Activated B cell treated with CpG ODN at 0.5 μM for 24 hours (primary cell): ENCODE measurements at regions of chr17 and their contacts with region 1.

Region 1: DNA sequence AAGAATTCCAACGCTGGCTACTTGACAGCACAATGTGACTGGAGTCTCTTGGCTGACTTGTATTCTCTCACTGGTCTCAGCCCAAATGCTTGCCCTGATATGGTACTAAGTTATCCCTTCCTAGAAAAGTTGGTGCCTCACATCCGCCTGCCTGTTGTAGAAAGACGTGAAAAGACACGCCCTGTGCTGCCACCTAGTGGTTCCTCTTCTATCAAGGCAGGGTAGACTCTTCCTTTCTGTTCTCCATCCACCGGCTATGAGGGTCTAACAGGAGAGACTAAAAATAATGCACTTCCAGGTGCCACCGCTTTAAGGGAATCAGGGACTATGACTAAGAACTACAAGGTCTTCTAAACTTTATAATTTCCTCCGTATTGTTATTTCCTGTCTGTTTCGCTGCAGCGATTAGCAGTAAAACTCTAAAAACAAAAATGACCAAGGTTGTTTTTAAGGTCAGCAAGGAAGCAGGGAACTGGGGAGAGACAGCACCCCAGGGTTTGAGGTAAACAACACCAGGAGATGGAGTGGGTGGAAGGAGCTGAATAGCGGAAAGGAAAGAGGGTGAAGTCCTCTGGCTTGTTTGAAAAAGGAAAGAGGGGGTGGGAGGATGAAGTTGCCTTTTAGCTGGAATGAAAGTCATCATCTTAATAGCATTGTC is 109.5 kb downstream of the YPEL2 start:
- DNase-seq: peak; percentile 56
- ATAC-seq: peak; percentile 91
- H3K4me3 Mint-ChIP-seq: no peak overlapping the region
- H3K27ac Mint-ChIP-seq: no peak overlapping the region
- H3K4me1 Mint-ChIP-seq: peaks cover 48% of the 10 kb centered on the region
- H3K27me3 Mint-ChIP-seq: peaks cover 4% of the 10 kb centered on the region
- CTCF ChIP-seq: peak; percentile 45

Region 2: GRCh38 chr17:59311130-59311920 is 129.6 kb before region 1 on chr17:
- CTCF ChIA-PET with region 1: interaction called, 160 read pairs
- POLR2A ChIA-PET with region 1: interaction called, 4 read pairs
- intact Hi-C with region 1: loop called (anchors 1 kb)
- DNase-seq: no peak
- ATAC-seq: peak; percentile 99
- H3K4me3 Mint-ChIP-seq: no peak overlapping the region
- H3K27ac Mint-ChIP-seq: no peak overlapping the region
- H3K4me1 Mint-ChIP-seq: no peaks in the 10 kb centered on the region
- H3K27me3 Mint-ChIP-seq: no peaks in the 10 kb centered on the region
- CTCF ChIP-seq: peak; percentile 86

Region 3: DNA sequence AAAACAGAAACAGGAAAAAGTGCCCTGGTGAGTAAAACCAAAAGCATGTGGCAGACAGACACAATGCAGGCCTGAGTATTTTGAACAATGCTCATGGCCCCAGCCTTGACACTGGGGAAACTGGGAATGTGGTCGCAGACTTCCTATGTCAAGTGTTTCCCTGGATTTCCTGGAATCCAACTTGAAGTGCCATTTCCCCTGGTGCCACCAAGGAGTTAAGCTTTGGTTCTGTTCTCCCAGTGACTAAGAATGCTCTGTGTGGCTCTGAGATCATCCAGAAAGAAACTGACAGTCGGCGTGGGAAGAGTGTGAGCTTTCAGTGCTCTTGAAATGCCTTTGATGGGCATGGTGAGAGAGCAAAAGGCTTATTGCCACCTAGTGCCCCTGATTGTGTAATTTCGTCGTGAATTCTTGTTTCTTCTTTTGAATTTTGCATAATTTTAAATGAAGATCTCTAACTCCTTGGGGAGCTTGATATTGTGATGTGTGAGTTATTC is 13.4 kb before region 1 on chr17:
- CTCF ChIA-PET with region 1: interaction called, 13 read pairs
- POLR2A ChIA-PET with region 1: interaction called, 3 read pairs
- intact Hi-C with region 1: no loop called
- DNase-seq: no peak
- ATAC-seq: no peak
- H3K4me3 Mint-ChIP-seq: no peak overlapping the region
- H3K27ac Mint-ChIP-seq: no peak overlapping the region
- H3K4me1 Mint-ChIP-seq: no peaks in the 10 kb centered on the region
- H3K27me3 Mint-ChIP-seq: no peaks in the 10 kb centered on the region
- CTCF ChIP-seq: no peak

Region 4: GRCh38 chr17:59547131-59547915 is 106.4 kb after region 1 on chr17:
- CTCF ChIA-PET with region 1: no interaction called
- POLR2A ChIA-PET with region 1: no interaction called
- intact Hi-C with region 1: no loop called
- DNase-seq: no peak
- ATAC-seq: no peak
- H3K4me3 Mint-ChIP-seq: no peak overlapping the region
- H3K27ac Mint-ChIP-seq: no peak overlapping the region
- H3K4me1 Mint-ChIP-seq: no peaks in the 10 kb centered on the region
- H3K27me3 Mint-ChIP-seq: peaks cover 1% of the 10 kb centered on the region
- CTCF ChIP-seq: no peak